ENCODE measurements at regions of chr3 and their contacts with region 1.

Region 1: DNA sequence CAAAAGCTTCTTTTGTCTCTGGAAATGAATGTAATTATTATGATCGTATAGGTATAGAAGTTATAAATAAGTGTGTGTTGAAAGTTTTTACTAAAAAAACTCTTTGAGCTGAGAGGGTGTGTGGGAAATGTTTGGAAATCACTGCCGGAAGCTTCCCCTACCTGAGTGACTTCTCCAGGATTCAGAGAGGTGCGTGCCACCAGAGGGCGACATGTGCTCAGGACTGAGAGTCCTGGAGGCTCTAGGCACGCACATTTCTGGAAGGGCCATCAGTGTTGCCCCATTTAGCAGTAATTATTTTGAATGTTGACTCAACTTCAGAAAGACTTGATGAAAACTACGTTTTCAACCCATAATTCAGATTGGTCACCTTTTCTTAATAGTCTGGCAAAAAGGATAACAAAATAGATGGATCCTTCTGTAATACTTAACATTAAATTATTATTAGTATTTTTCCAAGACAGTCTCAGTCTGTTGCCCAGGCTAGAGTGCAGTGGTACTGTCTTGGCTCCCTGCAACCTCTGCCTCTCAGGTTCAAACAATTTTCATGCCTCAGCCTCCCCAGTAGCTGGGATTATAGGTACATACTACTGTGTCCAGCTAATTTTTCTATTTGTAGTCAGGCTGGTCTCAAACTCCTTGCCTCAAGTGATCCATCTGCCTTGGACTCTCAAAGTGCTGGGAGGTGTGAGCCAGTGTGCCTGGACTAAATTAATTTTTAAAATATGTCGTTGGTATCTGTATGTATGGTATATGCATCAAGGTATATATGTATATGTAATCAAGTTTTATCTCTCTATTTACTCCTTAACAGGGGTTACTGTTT is 34.5 kb downstream of the GPR171 start:
- DNase-seq: peak; percentile 62
- H3K4me3 ChIP-seq: no peak overlapping the region
- H3K27ac ChIP-seq: no peak overlapping the region
- H3K4me1 ChIP-seq: no peaks in the 10 kb centered on the region; a peak in 1 of 4 replicates
- H3K27me3 ChIP-seq: 0 out of 2 replicates have a peak, but pooled peaks cover 5% of the 10 kb centered on the region
- CTCF ChIP-seq: peak; percentile 90
- EP300 ChIP-seq: no peak
- RAD21 ChIP-seq: peak; percentile 90

Region 2: GRCh38 chr3:151086484-151087456 is 81.7 kb before region 1 on chr3:
- CTCF ChIA-PET with region 1: no interaction called
- POLR2A ChIA-PET with region 1: no interaction called
- DNase-seq: peak; percentile 89
- H3K4me3 ChIP-seq: peak overlapping the region; percentile 57 to 65
- H3K27ac ChIP-seq: no peak overlapping the region
- H3K4me1 ChIP-seq: peaks cover 0 to 5% of the 10 kb centered on the region in 2 experiments; a peak in 1 of 4 replicates
- H3K27me3 ChIP-seq: peaks cover 78% of the 10 kb centered on the region
- CTCF ChIP-seq: peak; percentile 57
- EP300 ChIP-seq: no peak
- RAD21 ChIP-seq: peak; percentile 35

Region 3: DNA sequence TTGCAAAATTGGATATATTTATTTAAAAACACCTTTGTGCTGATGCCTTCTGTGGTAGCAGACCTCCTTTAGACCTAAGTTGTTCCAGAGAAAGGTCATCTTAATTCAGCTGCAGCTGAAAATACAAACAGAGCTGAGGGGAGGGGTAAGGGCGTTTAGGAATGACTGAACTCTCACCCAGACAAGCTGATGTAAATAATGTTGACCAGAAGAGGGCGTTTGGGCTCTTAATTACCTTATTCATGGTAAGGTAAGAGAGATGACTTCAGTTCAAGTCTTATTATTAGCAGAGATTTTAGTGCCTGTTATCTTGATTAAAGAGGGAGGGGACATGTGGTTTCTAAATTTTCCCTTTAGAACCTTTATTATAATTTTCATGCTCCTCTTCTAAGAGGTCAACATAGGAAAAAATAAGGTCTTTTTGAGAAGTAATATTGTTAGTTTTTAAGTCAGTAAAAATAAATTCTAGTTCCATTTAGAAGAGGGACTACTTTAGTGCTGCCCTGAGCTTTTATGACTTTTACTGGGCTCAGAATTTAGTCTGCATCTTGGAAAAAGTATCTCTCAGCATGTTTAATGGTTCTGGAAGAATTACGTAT is 11.8 kb before region 1 on chr3:
- CTCF ChIA-PET with region 1: interaction called, 27 read pairs
- POLR2A ChIA-PET with region 1: no interaction called
- DNase-seq: peak; percentile 53
- H3K4me3 ChIP-seq: no peak overlapping the region
- H3K27ac ChIP-seq: no peak overlapping the region
- H3K4me1 ChIP-seq: peaks cover 0 to 9% of the 10 kb centered on the region in 2 experiments; a peak in 2 of 4 replicates
- H3K27me3 ChIP-seq: peaks cover 5% of the 10 kb centered on the region; the same call in 1 of the 2 replicates
- CTCF ChIP-seq: peak; percentile 70
- EP300 ChIP-seq: no peak
- RAD21 ChIP-seq: peak; percentile 31; the same call in 1 of the 2 replicates

Region 4: DNA sequence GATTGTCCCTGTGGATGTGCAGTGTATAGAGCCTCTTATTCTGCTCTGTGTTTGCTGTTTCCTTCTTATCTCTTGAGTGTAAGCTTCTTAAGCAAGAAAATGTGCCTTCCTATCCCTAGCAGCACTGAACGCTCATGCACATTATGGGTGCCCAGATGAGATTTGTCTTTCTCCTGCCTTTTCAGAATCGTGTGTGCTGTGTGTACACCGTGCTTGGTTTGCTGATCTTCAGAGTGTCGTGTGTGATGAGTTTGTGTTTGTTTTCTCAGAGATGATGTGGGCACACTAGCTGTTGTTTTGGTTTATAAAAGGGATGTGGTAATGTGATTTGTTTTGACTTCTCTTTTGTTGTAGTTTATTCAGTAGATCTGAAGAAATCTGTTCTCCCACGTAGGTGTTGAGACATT is 14.8 kb after region 1 on chr3:
- CTCF ChIA-PET with region 1: interaction called, 22 read pairs
- POLR2A ChIA-PET with region 1: no interaction called
- DNase-seq: no peak
- H3K4me3 ChIP-seq: no peak overlapping the region
- H3K27ac ChIP-seq: no peak overlapping the region
- H3K4me1 ChIP-seq: peaks cover 0 to 7% of the 10 kb centered on the region in 2 experiments; a peak in 2 of 4 replicates
- H3K27me3 ChIP-seq: no peaks in the 10 kb centered on the region; the same call in 1 of the 2 replicates
- CTCF ChIP-seq: no peak
- EP300 ChIP-seq: no peak
- RAD21 ChIP-seq: no peak

Region 5: DNA sequence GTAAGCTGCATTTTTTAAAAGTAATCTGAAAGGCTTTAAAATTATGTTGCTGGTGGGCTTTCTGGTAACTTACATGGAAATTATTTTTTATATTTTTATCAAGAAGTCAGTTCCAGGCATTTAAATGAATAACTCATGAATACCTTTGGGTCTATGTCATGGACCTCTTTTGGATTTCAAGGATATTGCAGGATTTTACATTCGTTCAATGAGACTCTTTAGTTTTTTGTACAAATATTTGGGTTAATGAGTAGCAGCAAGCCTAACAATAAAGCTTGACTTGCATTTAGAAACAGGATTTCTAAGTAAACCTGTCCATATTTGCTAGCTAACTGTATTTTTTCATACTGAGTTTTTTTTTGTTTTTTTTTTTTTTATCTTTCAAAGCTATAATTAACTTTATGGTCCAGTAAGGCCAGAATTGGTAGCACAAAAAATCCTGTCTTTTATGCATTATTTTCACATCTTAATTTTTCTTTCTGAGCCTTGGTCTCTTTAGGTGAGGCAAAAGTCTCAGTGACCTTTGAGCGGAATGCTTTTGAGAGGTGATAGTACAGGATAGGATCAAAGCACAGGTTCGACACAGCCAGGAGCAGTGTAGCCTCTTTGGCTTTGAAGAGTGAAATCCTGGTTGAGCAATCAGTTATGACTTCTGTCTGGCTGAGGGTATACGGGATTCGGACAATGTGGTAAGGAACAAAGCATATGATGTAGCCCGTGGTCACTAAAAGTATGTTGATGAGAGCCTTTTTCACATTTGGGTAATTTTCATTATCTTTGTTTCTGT is 29.7 kb after region 1 on chr3:
- CTCF ChIA-PET with region 1: interaction called, 21 read pairs
- POLR2A ChIA-PET with region 1: no interaction called
- DNase-seq: no peak
- H3K4me3 ChIP-seq: no peak overlapping the region
- H3K27ac ChIP-seq: peak overlapping the region in 1 of 2 experiments; percentile 36; a peak in 2 of 4 replicates
- H3K4me1 ChIP-seq: no peaks in the 10 kb centered on the region
- H3K27me3 ChIP-seq: no peaks in the 10 kb centered on the region
- CTCF ChIP-seq: no peak
- EP300 ChIP-seq: no peak
- RAD21 ChIP-seq: no peak

Region 6: DNA sequence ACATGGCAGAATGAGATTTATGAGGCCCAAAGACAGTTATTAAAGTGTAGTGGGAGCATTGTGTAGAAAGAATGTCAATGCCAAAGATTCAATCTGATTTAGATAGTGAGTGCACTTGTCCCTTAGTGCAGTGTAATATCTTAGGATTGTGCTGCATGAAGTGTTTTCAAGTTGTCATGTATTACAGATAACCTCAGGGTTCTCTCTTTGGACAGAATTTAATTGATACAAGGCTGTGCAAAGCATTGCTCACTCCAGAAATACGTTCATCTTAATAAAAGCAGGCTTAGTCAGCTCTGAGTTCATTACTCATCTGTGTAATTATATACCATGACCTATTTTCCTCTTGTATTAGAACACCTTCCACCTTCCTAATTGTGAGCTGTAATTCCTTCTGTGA is 50.6 kb after region 1 on chr3:
- CTCF ChIA-PET with region 1: interaction called, 17 read pairs
- POLR2A ChIA-PET with region 1: no interaction called
- DNase-seq: no peak
- H3K4me3 ChIP-seq: no peak overlapping the region
- H3K27ac ChIP-seq: peak overlapping the region; percentile 72 to 95
- H3K4me1 ChIP-seq: peaks cover 13 to 22% of the 10 kb centered on the region in 2 experiments
- H3K27me3 ChIP-seq: no peaks in the 10 kb centered on the region
- CTCF ChIP-seq: no peak
- EP300 ChIP-seq: peak in 1 of 2 experiments; percentile 56; a peak in 1 of 4 replicates
- RAD21 ChIP-seq: no peak

Region 7: DNA sequence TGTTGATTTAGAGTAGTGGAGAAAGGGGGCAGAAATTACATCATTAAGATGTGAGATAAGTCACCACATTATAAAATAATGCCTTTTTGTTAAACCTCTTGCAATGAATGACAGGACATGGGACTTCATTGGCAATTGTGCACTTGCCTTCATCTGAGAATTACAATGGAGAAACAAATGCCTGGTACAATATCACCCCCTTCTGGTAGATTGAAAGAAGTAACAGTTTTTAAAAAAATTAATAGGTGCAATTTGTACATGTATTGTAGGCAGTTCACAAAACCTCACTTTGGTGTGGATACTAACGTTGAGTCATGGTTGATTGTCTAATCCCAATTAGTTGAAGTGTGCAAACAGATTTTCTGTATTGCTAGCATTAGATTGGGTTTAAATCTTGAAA is 114.4 kb after region 1 on chr3:
- CTCF ChIA-PET with region 1: interaction called, 106 read pairs
- POLR2A ChIA-PET with region 1: no interaction called
- DNase-seq: peak; percentile 50
- H3K4me3 ChIP-seq: no peak overlapping the region; a peak in 1 of 4 replicates
- H3K27ac ChIP-seq: no peak overlapping the region
- H3K4me1 ChIP-seq: peaks cover 0 to 2% of the 10 kb centered on the region in 2 experiments; a peak in 1 of 4 replicates
- H3K27me3 ChIP-seq: no peaks in the 10 kb centered on the region
- CTCF ChIP-seq: peak; percentile 76
- EP300 ChIP-seq: no peak
- RAD21 ChIP-seq: peak; percentile 89

Region 8: GRCh38 chr3:151290673-151291072 is 122.2 kb after region 1 on chr3:
- CTCF ChIA-PET with region 1: interaction called, 16 read pairs
- POLR2A ChIA-PET with region 1: no interaction called
- DNase-seq: peak; percentile 6
- H3K4me3 ChIP-seq: no peak overlapping the region
- H3K27ac ChIP-seq: no peak overlapping the region
- H3K4me1 ChIP-seq: no peaks in the 10 kb centered on the region
- H3K27me3 ChIP-seq: peaks cover 7% of the 10 kb centered on the region; the same call in 1 of the 2 replicates
- CTCF ChIP-seq: peak; percentile 77
- EP300 ChIP-seq: no peak
- RAD21 ChIP-seq: peak; percentile 76

Measured in SK-N-SH (cell line).